Heart right ventricle (tissue), 16 donors: ENCODE measurements at regions of chr2 and their contacts with region 1.

Region 1: GRCh38 chr2:209423562-209424198 is at the start of gene MAP2:
- DNase-seq: peak; percentile 84 to 89
- ATAC-seq: peak; percentile 95 to 100 (median 98)
- H3K4me3 ChIP-seq: peak within 1 kb of the TSS; percentile 53 to 87 (median 70)
- H3K27ac ChIP-seq: peak within 1 kb of the TSS in 7 of 10 donors; percentile 11 to 71 (median 48)
- H3K4me1 ChIP-seq: peaks cover 0 to 34% (median 15%) of the 10 kb centered on the region in 9 donors
- H3K27me3 ChIP-seq: peaks cover 0 to 28% (median 0%) of the 10 kb centered on the region in 7 donors
- CTCF ChIP-seq: peak; percentile 71 to 100 (median 96)
- total RNA-seq, gene MAP2: 4.5 to 15.5 (median 5.9) TPM

Region 2: DNA sequence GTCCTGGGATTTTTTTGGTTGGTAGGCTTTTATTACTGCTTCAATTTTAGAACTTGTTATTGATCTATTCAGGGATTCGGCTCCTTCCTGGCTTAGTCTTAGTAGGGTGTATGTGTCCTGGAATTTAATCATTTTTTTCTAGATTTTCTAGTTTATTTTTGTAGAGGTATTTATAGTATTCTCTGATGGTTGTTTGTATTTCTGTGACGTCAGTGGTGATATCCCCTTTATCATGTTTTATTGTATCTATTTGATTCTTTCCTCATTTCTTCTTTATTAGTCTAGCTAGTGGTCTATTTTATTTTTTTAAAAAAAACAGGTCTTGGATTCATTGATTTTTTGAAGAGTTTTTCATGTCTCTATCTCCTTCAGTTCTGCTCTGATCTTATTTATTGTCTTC is 193.1 kb before region 1 on chr2:
- intact Hi-C with region 1: no loop called
- DNase-seq: no peak
- ATAC-seq: no peak
- H3K4me3 ChIP-seq: no peak overlapping the region
- H3K27ac ChIP-seq: no peak overlapping the region
- H3K4me1 ChIP-seq: no peaks in the 10 kb centered on the region
- H3K27me3 ChIP-seq: no peaks in the 10 kb centered on the region
- CTCF ChIP-seq: no peak

Region 3: DNA sequence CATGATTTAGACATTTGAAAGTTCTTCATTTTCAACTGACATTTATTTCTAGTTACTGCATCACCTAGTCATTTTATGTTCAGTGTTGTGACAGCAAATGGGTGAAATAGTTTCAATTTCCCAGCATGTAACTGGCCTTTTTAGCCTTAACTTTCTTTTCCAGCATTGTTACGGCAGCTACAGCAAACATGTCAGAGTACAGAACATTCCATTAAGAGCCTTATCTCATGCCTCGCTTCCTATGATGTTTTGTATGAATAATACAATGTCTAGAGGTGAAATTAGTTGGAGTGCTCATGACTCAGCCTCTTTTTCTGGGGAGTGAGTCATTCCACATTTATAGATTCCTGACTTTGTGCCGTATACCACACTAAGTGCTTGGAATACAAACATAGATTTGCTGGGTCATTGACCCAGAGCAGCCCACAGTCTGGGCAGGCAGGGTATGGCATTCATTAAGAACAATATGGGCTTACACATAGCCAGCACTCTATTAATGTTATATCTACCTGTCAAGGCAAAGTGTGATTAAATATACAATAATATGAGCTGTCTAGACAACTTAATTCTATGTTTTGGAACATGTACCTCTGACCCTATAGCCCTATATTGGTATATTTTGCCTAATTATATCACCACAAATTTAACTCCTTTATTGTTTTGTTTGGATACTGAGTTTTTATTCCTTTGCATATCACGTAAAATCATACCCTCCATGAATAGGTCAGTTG is 72.3 kb after region 1 on chr2:
- intact Hi-C with region 1: loop called in 4 of 10 experiments (anchors 5 to 10 kb)
- DNase-seq: peak in 1 of 2 donors; percentile 67
- ATAC-seq: peak; percentile 91 to 98 (median 97)
- H3K4me3 ChIP-seq: peak overlapping the region in 5 of 10 donors; percentile 3 to 20 (median 12)
- H3K27ac ChIP-seq: peak overlapping the region; percentile 70 to 93 (median 82)
- H3K4me1 ChIP-seq: peaks cover 3 to 36% (median 15%) of the 10 kb centered on the region in 9 donors
- H3K27me3 ChIP-seq: no peaks in the 10 kb centered on the region
- CTCF ChIP-seq: no peak

Region 4: DNA sequence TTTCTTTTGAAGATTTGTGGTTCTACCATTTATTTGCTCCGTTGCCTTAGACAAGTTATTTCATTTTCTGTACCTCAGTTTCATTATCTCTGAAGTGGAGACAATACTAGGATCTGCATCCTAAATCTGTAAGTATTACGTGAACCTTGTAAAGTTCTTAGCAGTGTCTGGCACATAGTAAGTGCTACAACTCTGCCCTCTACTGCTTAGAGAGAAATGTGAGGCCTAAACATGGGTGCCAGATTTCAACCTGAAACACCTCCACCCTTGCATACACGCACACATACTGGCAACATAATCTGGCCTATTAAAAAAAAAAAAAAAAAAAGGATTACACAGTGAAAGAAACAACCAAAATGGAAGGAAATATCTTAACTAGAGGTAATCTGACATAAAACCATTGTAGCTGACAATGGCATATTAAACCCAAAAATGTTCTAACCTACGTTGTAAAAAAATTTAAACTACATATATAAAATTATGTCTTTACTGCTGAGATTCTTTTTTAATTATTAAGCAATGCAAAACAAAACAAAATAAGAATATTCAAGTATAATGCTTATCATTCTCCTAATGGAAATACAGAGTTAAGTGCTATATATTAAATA is 132.8 kb after region 1 on chr2:
- intact Hi-C with region 1: loop called (anchors 2 to 10 kb)
- DNase-seq: peak in 1 of 2 donors; percentile 17
- ATAC-seq: peak in 7 of 8 donors; percentile 47 to 84 (median 76)
- H3K4me3 ChIP-seq: no peak overlapping the region
- H3K27ac ChIP-seq: no peak overlapping the region
- H3K4me1 ChIP-seq: no peaks in the 10 kb centered on the region
- H3K27me3 ChIP-seq: no peaks in the 10 kb centered on the region
- CTCF ChIP-seq: peak; percentile 23 to 74 (median 56)

Region 5: DNA sequence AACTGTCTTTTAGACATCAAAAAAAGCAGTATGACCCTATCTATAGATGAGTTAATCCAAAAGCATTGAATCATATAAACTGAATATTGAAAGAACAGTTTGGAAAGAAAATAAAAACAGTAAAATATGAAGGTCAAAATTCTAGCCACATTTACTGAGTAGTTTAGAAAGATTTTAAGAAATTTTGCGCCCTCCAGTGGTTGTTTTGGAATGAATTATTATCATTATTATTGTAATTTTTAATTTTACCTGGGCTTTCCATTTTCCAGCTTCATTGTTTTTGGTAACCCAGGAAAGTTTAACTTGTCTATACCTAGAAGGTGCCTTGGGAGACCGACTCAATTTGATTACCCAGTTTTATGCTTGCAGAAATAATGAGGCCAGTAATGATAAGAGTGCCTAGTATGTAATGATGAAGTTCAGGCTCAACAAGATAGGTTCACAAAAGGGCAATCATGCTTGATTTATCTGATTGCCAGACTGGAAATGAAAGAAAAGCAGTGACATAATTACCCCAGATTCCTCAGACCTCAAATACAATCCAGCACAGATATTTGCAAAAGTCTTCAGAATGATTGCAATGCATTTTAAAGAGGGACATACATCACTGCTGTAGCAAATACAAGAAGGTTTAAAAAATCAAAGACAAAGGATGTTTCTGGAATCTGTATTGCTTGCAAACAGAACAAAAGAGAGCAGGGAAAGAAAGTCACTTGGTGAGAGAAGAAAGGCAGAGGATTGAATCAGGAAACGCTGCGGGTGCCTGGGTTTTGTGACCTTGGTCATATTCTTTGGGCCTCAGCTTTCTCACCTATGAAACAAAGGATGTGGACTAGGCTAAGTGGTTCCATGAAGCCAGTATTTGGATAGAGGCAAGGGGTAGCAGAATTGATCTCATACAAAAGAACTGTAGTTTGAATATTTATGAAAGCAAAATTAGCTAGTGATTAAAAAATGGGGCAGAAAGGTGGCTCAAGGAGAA is 154.0 kb after region 1 on chr2:
- intact Hi-C with region 1: loop called in 2 of 10 experiments (anchors 5 kb)
- DNase-seq: no peak
- ATAC-seq: no peak
- H3K4me3 ChIP-seq: no peak overlapping the region
- H3K27ac ChIP-seq: no peak overlapping the region
- H3K4me1 ChIP-seq: peaks cover 0 to 11% (median 0%) of the 10 kb centered on the region in 9 donors
- H3K27me3 ChIP-seq: no peaks in the 10 kb centered on the region
- CTCF ChIP-seq: peak in 7 of 9 donors; percentile 40 to 55 (median 46)

Region 6: GRCh38 chr2:209593930-209594329 is 170.2 kb after region 1 on chr2:
- intact Hi-C with region 1: no loop called
- DNase-seq: no peak
- ATAC-seq: no peak
- H3K4me3 ChIP-seq: no peak overlapping the region
- H3K27ac ChIP-seq: no peak overlapping the region
- H3K4me1 ChIP-seq: no peaks in the 10 kb centered on the region
- H3K27me3 ChIP-seq: no peaks in the 10 kb centered on the region
- CTCF ChIP-seq: no peak

Region 7: DNA sequence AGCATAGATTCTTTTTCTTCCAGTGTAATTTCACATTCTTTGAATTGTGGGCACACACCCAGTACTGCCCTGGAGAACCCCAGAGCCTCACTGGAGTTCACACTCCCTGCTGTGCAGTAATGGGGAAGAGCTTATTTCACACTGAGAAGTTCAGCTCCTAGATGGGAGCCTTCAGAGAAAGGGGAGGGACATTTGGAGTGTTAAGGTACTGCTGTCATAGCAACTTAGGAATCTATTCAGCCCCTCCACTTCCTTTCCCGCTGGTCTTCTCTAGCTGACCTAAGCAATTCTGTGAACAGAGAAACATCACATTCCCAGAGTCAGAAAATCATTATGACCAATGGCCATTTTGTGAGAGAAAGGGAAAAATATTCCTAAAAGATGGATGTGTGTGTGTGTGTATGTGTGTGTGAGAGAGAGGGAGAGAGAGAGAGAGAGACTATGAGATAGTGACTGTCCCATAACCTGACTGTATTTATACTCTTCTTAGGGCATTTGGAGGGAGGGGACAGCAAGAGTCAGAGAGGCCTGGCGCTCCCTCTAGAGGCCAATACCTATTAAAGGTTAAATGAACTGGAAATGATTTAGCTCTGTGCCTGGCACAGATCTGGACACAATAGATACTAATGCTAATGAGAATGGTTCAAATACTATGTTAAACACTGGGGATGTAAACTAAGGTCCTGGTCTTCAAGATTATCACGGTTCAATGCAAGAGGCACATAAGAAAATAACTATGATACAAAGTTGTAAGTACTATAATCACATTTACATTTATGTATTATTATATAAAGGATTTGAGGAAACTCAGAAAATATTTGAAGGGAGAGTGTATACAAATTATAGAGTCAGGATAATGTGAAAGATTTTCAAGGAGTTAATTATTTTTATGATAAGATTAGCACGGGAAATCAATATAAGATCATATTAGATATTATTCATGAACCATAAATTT is 537.3 kb after region 1 on chr2:
- intact Hi-C with region 1: loop called in 1 of 10 experiments (anchors 5 kb)
- DNase-seq: peak in 1 of 2 donors; percentile 21
- ATAC-seq: peak in 6 of 8 donors; percentile 49 to 80 (median 60)
- H3K4me3 ChIP-seq: no peak overlapping the region
- H3K27ac ChIP-seq: no peak overlapping the region
- H3K4me1 ChIP-seq: no peaks in the 10 kb centered on the region
- H3K27me3 ChIP-seq: no peaks in the 10 kb centered on the region
- CTCF ChIP-seq: peak; percentile 32 to 79 (median 68)